Thyroid gland (tissue), 4 donors: ENCODE measurements at regions of chr10 and their contacts with region 1.

Region 1: GRCh38 chr10:132452631-132453469 is 55.9 kb downstream of the PWWP2B start:
- DNase-seq: peak; percentile 93 to 94
- H3K4me3 ChIP-seq: no peak overlapping the region
- H3K27ac ChIP-seq: peak overlapping the region in 1 of 3 donors; percentile 30
- H3K4me1 ChIP-seq: peaks cover 11 to 23% of the 10 kb centered on the region in 2 donors
- H3K27me3 ChIP-seq: no peaks in the 10 kb centered on the region
- CTCF ChIP-seq: peak; percentile 81 to 99 (median 97)
- POLR2A ChIP-seq: no peak

Region 2: DNA sequence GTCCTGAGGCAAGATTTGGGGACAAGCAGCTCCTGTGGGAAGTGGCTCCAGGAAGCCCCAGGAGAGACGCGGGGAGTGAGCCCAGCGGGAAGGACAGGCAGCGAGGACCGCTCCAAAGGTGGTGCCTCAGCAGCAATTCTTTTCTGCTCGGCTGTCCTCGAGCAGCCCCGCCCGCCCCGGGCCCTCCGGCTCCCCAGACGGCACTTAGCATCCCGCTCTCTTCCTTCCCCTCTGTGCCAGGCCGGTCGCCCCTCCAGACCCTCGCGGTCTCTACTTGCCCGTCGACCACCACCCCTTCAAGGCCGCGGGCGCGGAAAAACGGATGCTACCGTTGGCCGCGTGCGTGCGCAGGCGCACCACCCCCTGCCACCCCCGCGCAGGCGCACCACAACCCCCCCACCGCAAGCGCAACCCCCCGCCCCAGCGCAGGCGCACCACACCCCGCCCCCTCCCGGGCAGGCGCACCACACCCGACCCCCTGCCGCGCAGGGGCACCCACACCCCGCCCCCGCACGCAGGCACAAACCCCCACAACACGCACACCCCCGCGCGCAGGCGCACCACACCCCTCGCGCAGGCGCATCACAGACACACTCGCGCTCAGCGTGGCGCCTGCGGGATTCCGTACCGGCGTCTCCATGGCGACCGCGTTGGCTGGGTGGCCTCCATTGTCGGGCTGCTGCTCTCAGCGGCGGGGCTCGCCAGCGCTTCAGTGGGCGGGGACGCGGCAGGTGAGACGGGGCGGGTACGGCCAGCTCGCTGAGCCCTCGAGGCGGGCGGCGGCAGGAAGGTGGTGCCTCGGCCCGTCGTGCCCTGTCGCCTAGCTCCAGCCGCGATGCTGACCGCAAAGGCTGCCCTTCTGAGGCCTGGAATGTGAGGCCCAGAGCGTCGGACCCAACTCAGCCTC is 121.1 kb before region 1 on chr10 and contains the start of gene LRRC27:
- intact Hi-C with region 1: no loop called
- DNase-seq: peak; percentile 99 to 100
- H3K4me3 ChIP-seq: peak within 1 kb of the TSS; percentile 68 to 94 (median 78)
- H3K27ac ChIP-seq: peak within 1 kb of the TSS; percentile 58 to 65 (median 63)
- H3K4me1 ChIP-seq: peaks cover 10 to 19% of the 10 kb centered on the region in 2 donors
- H3K27me3 ChIP-seq: no peaks in the 10 kb centered on the region
- CTCF ChIP-seq: no peak
- POLR2A ChIP-seq: peak; percentile 3 to 63
- total RNA-seq, gene LRRC27: 14.0 to 24.4 (median 19.4) TPM

Region 3: GRCh38 chr10:132395704-132396494 is 57.0 kb before region 1 on chr10:
- intact Hi-C with region 1: loop called (anchors 2 kb)
- DNase-seq: peak; percentile 84 to 88
- H3K4me3 ChIP-seq: peak overlapping the region in 1 of 3 donors; percentile 49
- H3K27ac ChIP-seq: peak overlapping the region; percentile 94 to 95 (median 95)
- H3K4me1 ChIP-seq: peaks cover 33 to 45% of the 10 kb centered on the region in 2 donors
- H3K27me3 ChIP-seq: no peaks in the 10 kb centered on the region
- CTCF ChIP-seq: peak in 1 of 6 experiments; percentile 7
- POLR2A ChIP-seq: peak; percentile 15 to 72